Dorsolateral prefrontal cortex (tissue), 120 donors: ENCODE measurements at regions of chr1 and their contacts with region 1.

Region 1: GRCh38 chr1:77281491-77282186 is at the start of gene AK5:
- DNase-seq: peak; percentile 9 to 82 (median 56)
- H3K4me3 ChIP-seq: peak within 1 kb of the TSS; percentile 61 to 92 (median 82)
- H3K27ac ChIP-seq: peak within 1 kb of the TSS; percentile 71 to 98 (median 94)
- H3K27me3 ChIP-seq: peaks cover 0 to 3% (median 0%) of the 10 kb centered on the region in 45 donors
- CTCF ChIP-seq: peak in 14 of 56 donors; percentile 2 to 37 (median 24)
- total RNA-seq, gene AK5: 74.1 to 345 (median 270) TPM

Region 2: GRCh38 chr1:77175230-77175844 is 106.3 kb before region 1 on chr1:
- intact Hi-C with region 1: loop called in 1 of 2 experiments (anchors 10 kb)
- DNase-seq: no peak
- H3K4me3 ChIP-seq: no peak overlapping the region
- H3K27ac ChIP-seq: no peak overlapping the region
- H3K27me3 ChIP-seq: no peaks in the 10 kb centered on the region
- CTCF ChIP-seq: no peak

Region 3: DNA sequence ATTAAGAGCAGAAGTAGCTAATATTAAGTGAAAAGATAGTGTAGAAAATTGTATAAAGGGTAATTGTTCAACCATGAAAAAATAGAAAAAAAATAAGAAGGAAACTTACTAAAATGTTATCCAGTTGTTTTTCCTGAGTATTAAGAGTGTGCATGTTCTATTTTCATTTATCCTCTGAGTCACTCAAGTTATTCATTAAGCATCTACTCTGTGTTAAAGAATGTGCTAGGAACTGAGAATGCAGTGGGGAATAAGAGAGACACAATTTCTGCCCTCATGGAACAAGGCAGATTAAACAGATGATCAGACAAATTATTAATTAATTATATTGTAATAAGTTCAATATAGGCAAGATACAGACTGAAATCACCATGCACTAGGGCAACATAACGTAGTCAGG is 51.6 kb before region 1 on chr1:
- intact Hi-C with region 1: no loop called
- DNase-seq: no peak
- H3K4me3 ChIP-seq: no peak overlapping the region
- H3K27ac ChIP-seq: no peak overlapping the region
- H3K27me3 ChIP-seq: no peaks in the 10 kb centered on the region
- CTCF ChIP-seq: no peak

Region 4: GRCh38 chr1:77347646-77348045 is 66.0 kb after region 1 on chr1:
- intact Hi-C with region 1: loop called in 1 of 2 experiments (anchors 5 kb)
- DNase-seq: peak in 2 of 10 donors; percentile 32 to 50
- H3K4me3 ChIP-seq: peak overlapping the region in 3 of 59 donors; percentile 1 to 13 (median 11)
- H3K27ac ChIP-seq: peak overlapping the region in 57 of 59 donors; percentile 5 to 87 (median 73)
- H3K27me3 ChIP-seq: no peaks in the 10 kb centered on the region
- CTCF ChIP-seq: no peak

Region 5: DNA sequence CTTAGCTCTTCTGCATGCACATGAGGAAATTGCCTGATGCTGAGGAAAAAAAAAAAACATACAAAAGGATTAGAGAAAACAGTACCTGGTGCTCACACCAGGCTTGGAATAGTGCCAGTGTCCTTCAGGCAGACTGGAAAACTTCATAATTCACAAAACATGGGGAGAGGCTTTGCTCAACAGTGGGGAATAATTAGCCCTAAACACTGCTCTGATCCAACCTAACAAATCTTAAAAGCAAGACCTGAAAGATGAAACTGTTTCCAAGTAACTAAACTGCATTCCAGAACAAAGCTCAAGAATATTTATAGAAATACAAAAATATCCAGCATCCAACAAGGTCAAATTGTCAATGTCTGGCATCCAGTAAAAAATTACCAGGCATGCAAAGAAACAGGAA is 125.0 kb after region 1 on chr1:
- intact Hi-C with region 1: loop called in 1 of 2 experiments (anchors 10 kb)
- DNase-seq: no peak
- H3K4me3 ChIP-seq: no peak overlapping the region
- H3K27ac ChIP-seq: peak overlapping the region in 55 of 59 donors; percentile 3 to 88 (median 75)
- H3K27me3 ChIP-seq: no peaks in the 10 kb centered on the region
- CTCF ChIP-seq: no peak

Region 6: DNA sequence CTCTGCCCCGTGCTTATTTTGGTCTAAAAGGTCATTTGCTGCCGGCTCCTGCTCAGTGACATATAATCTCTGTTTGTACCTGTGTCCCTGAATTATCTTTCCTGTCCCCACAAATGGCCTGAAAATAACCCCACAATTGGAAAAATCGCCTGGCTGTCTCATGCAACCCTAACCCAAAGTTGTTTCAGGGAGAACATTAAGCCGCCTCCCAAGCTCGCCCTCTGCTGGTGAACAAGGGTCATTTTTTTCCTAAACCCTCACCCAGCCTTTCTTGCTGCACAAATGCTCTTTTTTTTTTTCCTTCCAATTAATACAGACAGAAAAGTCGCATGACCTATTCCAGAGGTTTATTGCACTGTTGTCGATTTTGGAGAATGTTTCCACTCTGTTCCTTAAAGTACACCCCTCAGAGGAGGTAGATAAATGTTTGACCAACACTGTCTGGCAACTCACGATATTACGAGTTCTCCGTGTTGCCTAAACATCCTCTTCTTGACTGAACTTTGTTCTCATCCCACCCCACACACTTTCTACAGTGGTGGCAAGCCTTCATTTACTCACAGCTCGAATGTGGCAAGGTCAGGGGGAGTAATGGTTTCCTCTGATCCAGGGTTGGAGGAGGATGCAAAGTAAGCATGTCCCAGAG is 252.1 kb after region 1 on chr1:
- intact Hi-C with region 1: loop called (anchors 5 to 10 kb)
- DNase-seq: peak in 7 of 10 donors; percentile 18 to 70 (median 63)
- H3K4me3 ChIP-seq: peak overlapping the region in 9 of 59 donors; percentile 0 to 30 (median 11)
- H3K27ac ChIP-seq: peak overlapping the region; percentile 1 to 94 (median 81)
- H3K27me3 ChIP-seq: no peaks in the 10 kb centered on the region
- CTCF ChIP-seq: peak; percentile 81 to 98 (median 90)